ENCODE measurements at regions of chr9 and their contacts with region 1.

Region 1: DNA sequence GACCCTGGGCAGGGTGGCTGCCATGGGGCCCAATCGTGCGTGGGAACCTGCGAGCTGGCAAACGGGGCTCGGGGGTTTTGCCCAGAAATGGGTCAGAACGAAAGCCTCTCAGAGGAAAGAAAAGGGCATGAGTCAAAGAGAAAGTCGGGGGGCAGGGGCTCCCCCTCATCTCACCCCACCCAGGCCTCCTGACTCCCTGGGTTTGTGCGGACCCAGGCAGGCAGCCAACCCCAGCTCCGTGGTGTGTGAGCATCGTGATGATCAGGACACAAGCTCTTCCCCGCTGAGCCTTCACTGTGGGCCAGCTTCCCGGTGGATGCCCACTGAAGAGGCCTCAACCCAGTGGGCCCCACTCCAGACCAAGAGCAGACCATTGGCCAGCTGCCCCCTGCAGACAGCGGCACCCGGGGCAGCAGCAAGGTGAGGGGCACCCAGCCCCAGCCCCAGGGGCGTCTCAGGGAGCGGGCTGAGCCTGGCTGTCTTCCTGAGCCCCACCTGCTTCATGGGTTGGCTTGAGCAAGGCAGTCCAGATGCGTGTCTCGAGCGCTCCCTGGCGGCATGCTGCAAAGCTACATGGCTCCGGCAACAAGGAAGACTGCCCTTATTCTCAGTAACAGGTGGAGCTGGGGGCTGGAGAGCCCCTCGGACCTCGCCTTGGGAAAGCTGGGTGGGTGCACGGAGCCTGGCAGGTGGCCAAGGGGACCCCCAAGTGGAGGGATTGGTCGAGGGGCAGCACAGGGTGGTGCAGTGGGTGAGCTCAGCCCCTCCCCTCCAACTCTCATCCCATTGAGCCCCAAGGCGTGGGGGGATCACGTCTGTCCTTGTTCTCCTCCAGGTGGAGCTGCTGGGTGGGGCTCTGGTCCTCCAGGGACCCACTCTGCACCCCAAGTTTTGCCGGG is 3.2 kb upstream of the FUT7 start:
- DNase-seq: peak; percentile 91
- H3K4me3 Mint-ChIP-seq: peak overlapping the region; percentile 61
- H3K27ac Mint-ChIP-seq: peak overlapping the region; percentile 92
- H3K4me1 Mint-ChIP-seq: peaks cover 42% of the 10 kb centered on the region
- H3K27me3 Mint-ChIP-seq: no peaks in the 10 kb centered on the region

Region 2: DNA sequence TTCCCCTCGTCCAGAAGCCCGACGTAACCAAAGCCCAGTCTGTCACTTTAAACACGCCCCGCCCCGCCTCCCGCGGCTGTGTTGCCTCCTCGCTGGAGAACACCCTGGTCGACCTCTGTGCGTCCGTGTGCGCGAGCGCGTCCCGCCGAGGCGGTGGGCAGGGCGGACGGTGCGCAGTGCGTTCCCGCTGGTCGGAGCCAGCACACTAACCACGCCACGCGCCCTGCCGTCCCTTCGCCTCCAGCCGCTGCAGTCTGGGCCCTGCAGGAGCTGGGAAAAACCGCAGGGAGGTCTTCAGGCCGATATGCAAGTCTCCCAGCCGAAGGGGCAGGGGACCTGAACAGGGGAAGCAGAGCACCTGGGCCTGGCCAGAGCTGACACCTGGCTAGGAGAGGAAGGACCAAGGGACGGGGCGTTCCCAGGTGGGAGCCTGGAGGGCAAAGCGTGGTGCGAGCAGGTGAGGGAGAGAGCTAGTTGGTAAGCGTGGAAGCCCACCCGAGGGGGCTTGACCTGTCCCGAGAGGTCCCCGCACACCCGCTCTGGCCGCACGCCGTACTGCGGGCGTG is 187.2 kb before region 1 on chr9:
- CTCF ChIA-PET with region 1: interaction called, 19 read pairs
- POLR2A ChIA-PET with region 1: no interaction called
- DNase-seq: peak; percentile 81
- H3K4me3 Mint-ChIP-seq: peak overlapping the region; percentile 92
- H3K27ac Mint-ChIP-seq: peak overlapping the region; percentile 67
- H3K4me1 Mint-ChIP-seq: peaks cover 21% of the 10 kb centered on the region
- H3K27me3 Mint-ChIP-seq: peaks cover 17% of the 10 kb centered on the region

Region 3: GRCh38 chr9:136975644-136976043 is 59.5 kb before region 1 on chr9:
- CTCF ChIA-PET with region 1: interaction called, 15 read pairs
- POLR2A ChIA-PET with region 1: no interaction called
- DNase-seq: peak; percentile 33
- H3K4me3 Mint-ChIP-seq: peak overlapping the region; percentile 55
- H3K27ac Mint-ChIP-seq: peak overlapping the region; percentile 66
- H3K4me1 Mint-ChIP-seq: peaks cover 13% of the 10 kb centered on the region
- H3K27me3 Mint-ChIP-seq: peaks cover 1% of the 10 kb centered on the region

Region 4: DNA sequence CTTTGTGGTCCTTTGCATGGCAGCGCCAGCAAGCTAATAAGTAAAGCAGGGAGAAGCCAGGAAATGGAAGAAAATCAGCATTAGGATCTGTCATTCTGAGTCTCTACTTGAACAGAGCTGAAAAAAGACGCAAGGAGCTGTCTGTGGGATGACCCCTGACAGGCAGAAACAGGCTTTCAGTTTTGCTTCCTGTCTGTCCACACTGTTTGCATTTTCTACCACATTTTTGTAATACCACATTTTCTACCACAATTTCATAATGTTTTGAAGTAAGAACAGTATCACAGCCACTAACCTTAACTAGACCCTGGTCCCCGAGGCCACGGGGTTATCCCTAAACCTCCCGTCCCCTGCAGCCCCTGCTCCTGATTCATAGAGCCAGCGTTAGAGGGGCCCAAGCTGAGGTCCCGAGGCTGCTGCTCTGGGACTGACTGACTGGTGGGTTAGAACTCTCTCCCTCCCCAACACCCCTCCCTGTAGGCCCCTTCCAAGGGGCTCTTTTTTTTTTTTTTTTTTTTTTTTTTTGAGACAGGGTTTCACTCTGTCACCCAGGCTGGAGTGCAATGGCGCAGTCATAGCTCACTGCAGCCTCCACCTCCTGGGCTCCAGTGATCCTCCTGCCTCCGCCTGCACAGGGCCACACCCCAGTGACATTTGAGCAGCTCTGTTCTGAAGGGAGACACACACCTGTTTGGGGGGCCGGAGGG is 34.8 kb before region 1 on chr9:
- CTCF ChIA-PET with region 1: interaction called, 10 read pairs
- POLR2A ChIA-PET with region 1: no interaction called
- DNase-seq: peak; percentile 49
- H3K4me3 Mint-ChIP-seq: peak overlapping the region; percentile 25
- H3K27ac Mint-ChIP-seq: peak overlapping the region; percentile 75
- H3K4me1 Mint-ChIP-seq: peaks cover 42% of the 10 kb centered on the region
- H3K27me3 Mint-ChIP-seq: peaks cover 6% of the 10 kb centered on the region

Region 5: GRCh38 chr9:137046098-137046787 is 11.1 kb after region 1 on chr9 and contains the start of gene NPDC1:
- CTCF ChIA-PET with region 1: interaction called, 59 read pairs
- POLR2A ChIA-PET with region 1: no interaction called
- DNase-seq: peak; percentile 86
- H3K4me3 Mint-ChIP-seq: peak within 1 kb of the TSS; percentile 70
- H3K27ac Mint-ChIP-seq: peak within 1 kb of the TSS; percentile 54
- H3K4me1 Mint-ChIP-seq: peaks cover 19% of the 10 kb centered on the region
- H3K27me3 Mint-ChIP-seq: peaks cover 32% of the 10 kb centered on the region
- total RNA-seq, gene NPDC1: 35.5 to 41.4 TPM

Region 6: GRCh38 chr9:137086531-137087408 is 51.7 kb after region 1 on chr9 and contains the start of gene MAN1B1:
- CTCF ChIA-PET with region 1: interaction called, 20 read pairs
- POLR2A ChIA-PET with region 1: no interaction called
- DNase-seq: peak; percentile 100
- H3K4me3 Mint-ChIP-seq: peak within 1 kb of the TSS; percentile 85
- H3K27ac Mint-ChIP-seq: peak within 1 kb of the TSS; percentile 97
- H3K4me1 Mint-ChIP-seq: peaks cover 44% of the 10 kb centered on the region
- H3K27me3 Mint-ChIP-seq: no peaks in the 10 kb centered on the region
- total RNA-seq, gene MAN1B1: 43.0 to 55.0 TPM